Posterior vena cava (tissue), 2 donors: ENCODE measurements at regions of chr2 and their contacts with region 1.

Region 1: GRCh38 chr2:54977149-54977548 is 73.1 kb downstream of the RTN4 start:
- DNase-seq: no peak

Region 2: DNA sequence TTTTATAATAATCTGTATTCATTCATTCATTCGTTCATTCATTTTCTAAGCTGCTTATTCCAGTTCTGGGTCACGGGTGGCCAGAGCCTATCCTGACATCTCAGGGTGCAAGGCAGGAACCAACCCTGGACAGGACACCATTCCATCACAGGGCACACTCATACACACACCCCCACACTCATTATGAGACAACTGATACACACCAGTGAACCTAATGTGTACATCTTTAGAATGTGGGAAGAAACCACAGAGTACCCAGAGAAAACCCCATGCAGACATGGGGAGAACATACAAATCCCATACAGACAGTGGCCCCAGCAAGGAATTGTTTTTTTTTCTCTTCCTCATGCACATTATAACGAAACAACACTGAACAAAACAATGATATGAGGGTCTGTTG is 18.4 kb after region 1 on chr2:
- intact Hi-C with region 1: loop called in 1 of 2 experiments (anchors 1 kb)
- DNase-seq: no peak